CD8-positive, alpha-beta T cell (primary cell): ENCODE measurements at regions of chrX and their contacts with region 1.

Region 1: DNA sequence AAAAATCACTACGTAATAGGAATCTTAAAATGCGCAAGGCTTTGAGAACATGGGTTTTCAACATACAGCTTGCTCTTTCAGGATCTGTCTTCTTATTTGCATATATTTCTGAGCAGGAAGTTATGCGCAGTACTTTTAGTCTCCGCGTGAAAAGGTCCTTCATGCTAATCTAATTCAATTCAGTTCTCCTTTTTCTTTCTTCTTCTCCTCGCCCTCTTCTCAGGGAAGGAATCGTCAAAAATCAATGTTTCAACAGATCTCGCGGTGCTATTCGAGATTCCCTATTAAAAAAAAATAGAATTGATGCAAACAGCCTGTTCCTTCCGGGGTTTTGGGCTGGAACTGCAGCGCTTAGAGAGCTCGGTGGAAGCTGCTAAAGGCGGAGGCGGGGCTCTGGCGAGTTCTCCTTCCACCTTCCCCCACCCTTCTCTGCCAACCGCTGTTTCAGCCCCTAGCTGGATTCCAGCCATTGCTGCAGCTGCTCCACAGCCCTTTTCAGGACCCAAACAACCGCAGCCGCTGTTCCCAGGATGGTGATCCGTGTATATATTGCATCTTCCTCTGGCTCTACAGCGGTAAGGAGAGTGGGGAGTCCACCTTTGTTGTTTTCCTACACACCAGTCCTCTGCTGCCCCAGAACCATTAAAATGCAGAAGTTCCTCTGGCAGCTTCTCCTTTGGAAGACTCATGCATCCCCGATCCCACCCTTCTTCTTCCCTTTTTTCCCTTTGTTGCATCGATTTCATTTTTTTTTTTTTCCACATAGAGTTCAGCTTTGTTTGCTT is at the starts of genes HMGN5 and SH3BGRL:
- DNase-seq: peak; percentile 33 to 87 (median 70)
- ATAC-seq: peak; percentile 95
- H3K4me3 ChIP-seq: peak within 1 kb of the TSS; percentile 83 to 90
- H3K4me3 Mint-ChIP-seq: peak within 1 kb of the TSS; percentile 97
- H3K27ac ChIP-seq: peak within 1 kb of the TSS; percentile 84 to 89
- H3K27ac Mint-ChIP-seq: peak within 1 kb of the TSS; percentile 94
- H3K4me1 ChIP-seq: peaks cover 6% of the 10 kb centered on the region
- H3K4me1 Mint-ChIP-seq: peaks cover 48% of the 10 kb centered on the region
- H3K27me3 ChIP-seq: no peaks in the 10 kb centered on the region
- H3K27me3 Mint-ChIP-seq: no peaks in the 10 kb centered on the region
- CTCF ChIP-seq: no peak
- total RNA-seq, gene HMGN5: 0.27 to 0.92 TPM
- total RNA-seq, gene SH3BGRL: 37.3 to 39.5 TPM

Region 2: DNA sequence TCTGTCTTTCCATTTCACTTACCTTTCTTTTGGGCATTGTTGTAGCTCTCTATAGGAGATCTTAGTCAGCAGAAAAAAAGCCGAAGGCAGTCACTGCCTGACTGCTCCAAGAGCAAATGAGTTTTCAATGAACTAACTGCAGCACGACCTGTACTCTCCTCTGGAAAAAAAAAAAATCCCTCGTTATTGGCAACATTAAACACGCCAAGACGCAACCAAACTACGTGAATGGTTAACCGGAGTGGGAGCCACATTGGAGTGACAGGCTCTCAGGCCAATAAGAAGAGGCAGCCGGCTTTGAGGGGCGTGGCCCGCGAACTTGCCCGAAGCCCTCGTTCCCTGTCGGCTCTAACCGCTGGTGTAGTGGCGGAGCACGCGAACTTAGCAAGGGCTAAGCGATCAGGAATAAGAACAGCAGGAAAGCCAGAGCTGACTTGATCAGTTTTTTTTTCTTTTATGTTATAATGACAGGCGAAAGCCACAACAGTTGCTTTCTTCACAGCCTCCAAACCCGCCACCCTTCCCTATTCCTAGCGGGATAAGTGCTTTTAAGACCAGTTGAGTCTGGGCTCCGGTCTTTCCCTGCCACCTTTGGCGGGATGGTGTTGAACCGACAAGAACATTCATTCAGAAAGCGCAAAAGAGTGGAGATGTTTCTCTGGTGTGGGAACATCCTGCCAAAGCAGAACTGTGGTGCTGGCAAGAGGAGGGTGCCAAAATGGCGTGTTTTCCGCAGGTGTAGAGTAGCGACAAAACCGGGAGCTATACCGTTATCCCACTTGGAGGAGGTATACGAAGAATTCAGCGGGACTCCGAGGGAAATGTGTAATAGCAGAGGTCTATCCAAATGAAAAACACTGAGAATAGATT is 80.1 kb before region 1 on chrX:
- CTCF ChIA-PET with region 1: no interaction called
- POLR2A ChIA-PET with region 1: interaction called, 4 read pairs
- intact Hi-C with region 1: loop called (anchors 2 to 5 kb)
- DNase-seq: peak; percentile 71 to 91 (median 84)
- ATAC-seq: peak; percentile 94
- H3K4me3 ChIP-seq: peak overlapping the region; percentile 71 to 82
- H3K4me3 Mint-ChIP-seq: peak overlapping the region; percentile 93
- H3K27ac ChIP-seq: peak overlapping the region in 1 of 2 experiments; percentile 39
- H3K27ac Mint-ChIP-seq: peak overlapping the region; percentile 46
- H3K4me1 ChIP-seq: peaks cover 4% of the 10 kb centered on the region
- H3K4me1 Mint-ChIP-seq: peaks cover 9% of the 10 kb centered on the region
- H3K27me3 ChIP-seq: no peaks in the 10 kb centered on the region
- H3K27me3 Mint-ChIP-seq: no peaks in the 10 kb centered on the region
- CTCF ChIP-seq: no peak

Region 3: GRCh38 chrX:81280148-81280547 is 78.3 kb after region 1 on chrX:
- CTCF ChIA-PET with region 1: no interaction called
- POLR2A ChIA-PET with region 1: no interaction called
- intact Hi-C with region 1: loop called in 1 of 2 experiments (anchors 10 kb)
- DNase-seq: no peak
- ATAC-seq: no peak
- H3K4me3 ChIP-seq: no peak overlapping the region
- H3K4me3 Mint-ChIP-seq: no peak overlapping the region
- H3K27ac ChIP-seq: no peak overlapping the region
- H3K27ac Mint-ChIP-seq: no peak overlapping the region
- H3K4me1 ChIP-seq: no peaks in the 10 kb centered on the region
- H3K4me1 Mint-ChIP-seq: peaks cover under 1% of the 10 kb centered on the region
- H3K27me3 ChIP-seq: no peaks in the 10 kb centered on the region
- H3K27me3 Mint-ChIP-seq: no peaks in the 10 kb centered on the region
- CTCF ChIP-seq: no peak

Region 4: DNA sequence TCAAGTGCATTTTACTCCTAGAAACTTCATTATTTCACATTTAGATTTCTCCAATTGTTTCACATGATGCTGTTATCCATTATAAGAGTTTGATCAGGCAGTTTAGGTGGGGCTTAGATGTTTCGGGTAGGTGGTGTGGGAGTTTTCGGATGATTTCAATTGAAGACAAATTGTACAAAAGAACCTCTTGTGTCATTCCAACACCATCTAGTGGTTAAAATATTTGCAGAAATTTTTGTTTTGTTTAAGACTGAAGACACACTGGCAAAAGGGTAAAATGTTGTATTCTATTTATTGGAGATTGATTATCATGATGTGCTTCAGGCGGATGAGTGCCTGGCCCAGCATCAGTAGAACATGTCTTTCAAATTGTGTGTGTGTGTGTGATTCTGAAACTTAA is 212.8 kb after region 1 on chrX:
- CTCF ChIA-PET with region 1: no interaction called
- POLR2A ChIA-PET with region 1: no interaction called
- intact Hi-C with region 1: no loop called
- DNase-seq: no peak
- ATAC-seq: no peak
- H3K4me3 ChIP-seq: no peak overlapping the region
- H3K4me3 Mint-ChIP-seq: no peak overlapping the region
- H3K27ac ChIP-seq: no peak overlapping the region
- H3K27ac Mint-ChIP-seq: no peak overlapping the region
- H3K4me1 ChIP-seq: no peaks in the 10 kb centered on the region
- H3K4me1 Mint-ChIP-seq: no peaks in the 10 kb centered on the region
- H3K27me3 ChIP-seq: no peaks in the 10 kb centered on the region
- H3K27me3 Mint-ChIP-seq: no peaks in the 10 kb centered on the region
- CTCF ChIP-seq: no peak